ENCODE measurements at regions of chr2 and their contacts with region 1.

Region 1: GRCh38 chr2:42230891-42231290 is 61.7 kb downstream of the EML4 start:
- DNase-seq: no peak
- ATAC-seq: no peak
- H3K4me3 ChIP-seq: no peak overlapping the region
- H3K4me3 Mint-ChIP-seq: no peak overlapping the region
- H3K27ac ChIP-seq: no peak overlapping the region
- H3K27ac Mint-ChIP-seq: peak overlapping the region; percentile 32
- H3K4me1 ChIP-seq: peaks cover 39% of the 10 kb centered on the region
- H3K4me1 Mint-ChIP-seq: peaks cover 76% of the 10 kb centered on the region
- H3K27me3 ChIP-seq: no peaks in the 10 kb centered on the region
- H3K27me3 Mint-ChIP-seq: no peaks in the 10 kb centered on the region
- CTCF ChIP-seq: no peak

Region 2: DNA sequence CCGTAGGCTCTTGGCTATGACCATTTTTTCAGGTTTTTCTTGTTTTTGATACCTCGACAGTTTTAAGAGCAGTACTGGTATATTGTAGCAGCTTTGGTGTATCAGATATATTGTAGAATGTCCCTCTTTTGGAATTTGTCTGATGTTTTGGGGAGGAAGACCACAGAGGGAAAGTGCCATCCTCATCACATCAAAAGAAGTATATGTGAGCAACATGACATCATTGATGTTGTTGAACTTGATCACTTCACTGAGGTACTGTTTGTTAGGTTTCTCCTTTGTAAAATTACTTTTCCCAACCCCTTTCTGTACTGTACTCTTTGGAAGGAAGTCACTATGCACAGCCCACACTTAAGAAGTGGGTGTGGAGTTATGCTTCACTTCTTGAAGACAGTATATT is 20.7 kb before region 1 on chr2:
- CTCF ChIA-PET with region 1: no interaction called
- POLR2A ChIA-PET with region 1: no interaction called
- intact Hi-C with region 1: loop called in 1 of 2 experiments (anchors 2 kb)
- DNase-seq: no peak
- ATAC-seq: no peak
- H3K4me3 ChIP-seq: no peak overlapping the region
- H3K4me3 Mint-ChIP-seq: no peak overlapping the region
- H3K27ac ChIP-seq: no peak overlapping the region
- H3K27ac Mint-ChIP-seq: no peak overlapping the region
- H3K4me1 ChIP-seq: peaks cover 33% of the 10 kb centered on the region
- H3K4me1 Mint-ChIP-seq: peaks cover 65% of the 10 kb centered on the region
- H3K27me3 ChIP-seq: no peaks in the 10 kb centered on the region
- H3K27me3 Mint-ChIP-seq: no peaks in the 10 kb centered on the region
- CTCF ChIP-seq: no peak

Region 3: GRCh38 chr2:42216712-42217111 is 14.2 kb before region 1 on chr2:
- CTCF ChIA-PET with region 1: interaction called, 3 read pairs
- POLR2A ChIA-PET with region 1: interaction called, 3 read pairs
- intact Hi-C with region 1: loop called in 1 of 2 experiments (anchors 2 kb)
- DNase-seq: no peak
- ATAC-seq: no peak
- H3K4me3 ChIP-seq: no peak overlapping the region
- H3K4me3 Mint-ChIP-seq: no peak overlapping the region
- H3K27ac ChIP-seq: no peak overlapping the region
- H3K27ac Mint-ChIP-seq: no peak overlapping the region
- H3K4me1 ChIP-seq: peaks cover 19% of the 10 kb centered on the region
- H3K4me1 Mint-ChIP-seq: peaks cover 71% of the 10 kb centered on the region
- H3K27me3 ChIP-seq: no peaks in the 10 kb centered on the region
- H3K27me3 Mint-ChIP-seq: no peaks in the 10 kb centered on the region
- CTCF ChIP-seq: no peak